ENCODE measurements at regions of chr2 and their contacts with region 1.

Region 1: DNA sequence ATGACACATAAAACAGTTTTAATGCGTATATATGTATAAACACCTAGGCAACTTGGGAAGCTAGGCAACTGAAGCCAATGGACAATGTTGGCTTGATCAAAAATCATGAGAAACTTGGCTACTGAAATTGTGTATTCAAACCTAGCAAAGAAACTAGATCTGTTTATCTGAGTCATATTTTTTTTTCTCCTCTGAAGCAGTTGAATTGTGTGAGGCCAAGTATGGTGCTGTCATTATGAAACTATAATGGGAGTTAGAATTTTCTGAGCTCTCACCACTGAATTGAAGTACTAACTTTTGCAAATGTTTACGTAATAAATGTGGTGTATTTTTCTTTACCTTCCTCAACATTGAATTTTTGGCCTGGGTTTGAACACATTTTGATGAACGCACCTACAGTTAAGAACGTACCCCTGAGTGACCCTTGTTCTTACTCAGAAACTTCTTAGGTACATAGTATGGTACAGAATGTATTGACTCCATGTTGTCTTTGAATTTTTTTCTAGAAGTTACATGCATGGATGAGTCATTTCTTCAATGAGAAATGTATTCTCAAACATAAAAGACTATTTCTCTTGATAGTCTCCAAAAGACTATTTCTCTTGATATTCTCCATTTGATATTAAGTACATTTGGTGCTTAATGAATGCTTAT is 23.8 kb downstream of the CD28 start:
- DNase-seq: no peak
- ATAC-seq: peak; percentile 55
- H3K4me3 Mint-ChIP-seq: no peak overlapping the region
- H3K27ac Mint-ChIP-seq: peak overlapping the region; percentile 72
- H3K4me1 Mint-ChIP-seq: peaks cover 81% of the 10 kb centered on the region
- H3K27me3 Mint-ChIP-seq: no peaks in the 10 kb centered on the region

Region 2: GRCh38 chr2:203706403-203706802 is 23.8 kb before region 1 on chr2 and contains the start of gene CD28:
- CTCF ChIA-PET with region 1: interaction called, 4 read pairs
- POLR2A ChIA-PET with region 1: interaction called, 34 read pairs
- DNase-seq: peak; percentile 95
- ATAC-seq: peak; percentile 81
- H3K4me3 Mint-ChIP-seq: peak within 1 kb of the TSS; percentile 72
- H3K27ac Mint-ChIP-seq: peak within 1 kb of the TSS; percentile 87
- H3K4me1 Mint-ChIP-seq: peaks cover 66% of the 10 kb centered on the region
- H3K27me3 Mint-ChIP-seq: no peaks in the 10 kb centered on the region
- total RNA-seq, gene CD28: 25.6 to 27.2 TPM

Region 3: DNA sequence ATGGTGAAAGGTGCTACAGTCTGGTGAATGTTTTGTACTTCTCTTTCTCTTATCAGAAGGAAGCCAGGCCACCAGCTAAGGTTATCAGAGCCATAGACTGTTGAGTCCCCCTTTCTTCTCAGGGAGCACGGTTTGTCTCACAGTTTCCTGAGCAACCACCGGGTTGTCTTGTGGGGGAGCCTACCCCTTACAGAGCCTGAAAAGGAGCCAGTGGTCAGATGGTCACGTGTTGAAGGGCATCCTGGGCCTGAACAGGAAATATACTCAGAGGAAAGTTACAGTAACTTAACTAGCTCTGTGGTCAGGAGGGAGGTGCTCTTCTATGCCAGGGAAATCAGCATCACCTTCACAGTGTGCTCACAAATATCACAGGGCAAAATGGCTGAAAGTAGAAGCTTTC is 12.1 kb before region 1 on chr2:
- CTCF ChIA-PET with region 1: interaction called, 55 read pairs
- POLR2A ChIA-PET with region 1: interaction called, 64 read pairs
- DNase-seq: peak; percentile 89
- ATAC-seq: peak; percentile 84
- H3K4me3 Mint-ChIP-seq: peak overlapping the region; percentile 62
- H3K27ac Mint-ChIP-seq: peak overlapping the region; percentile 90
- H3K4me1 Mint-ChIP-seq: peaks cover 95% of the 10 kb centered on the region
- H3K27me3 Mint-ChIP-seq: no peaks in the 10 kb centered on the region

Region 4: DNA sequence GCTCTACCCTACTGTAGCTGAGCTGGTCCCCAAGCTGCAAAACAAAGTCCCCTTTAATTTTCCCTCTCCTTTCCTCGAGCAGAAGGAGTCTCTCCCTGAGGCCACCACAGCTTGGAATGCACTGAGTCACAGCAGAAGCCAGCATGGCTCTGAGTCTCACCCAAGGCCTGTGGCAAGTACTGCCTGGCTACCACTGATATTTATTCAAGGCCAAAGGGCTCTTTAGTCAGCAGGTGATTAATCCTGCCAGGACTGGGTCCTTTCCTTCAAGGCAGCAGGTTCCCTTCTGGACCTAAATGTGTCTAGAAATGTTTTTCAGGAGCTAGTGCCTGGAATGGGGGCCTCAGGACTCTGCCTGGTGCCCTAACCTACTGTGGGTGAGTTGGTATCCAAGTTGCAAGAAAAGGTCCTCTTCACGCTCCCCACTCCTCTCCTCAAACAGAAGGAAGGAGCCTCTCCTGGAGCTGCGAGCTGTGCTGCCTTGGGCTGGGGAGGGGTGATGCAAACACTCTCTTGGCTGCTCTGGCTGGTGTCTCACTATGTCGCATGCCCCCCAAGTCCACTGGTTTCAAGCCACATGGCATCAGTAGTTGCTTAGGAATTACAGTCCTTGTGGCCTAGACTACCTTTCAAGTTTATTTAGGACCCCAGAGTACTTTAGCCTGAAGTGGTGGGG is 29.6 kb after region 1 on chr2:
- CTCF ChIA-PET with region 1: no interaction called
- POLR2A ChIA-PET with region 1: no interaction called
- DNase-seq: no peak
- ATAC-seq: no peak
- H3K4me3 Mint-ChIP-seq: no peak overlapping the region
- H3K27ac Mint-ChIP-seq: no peak overlapping the region
- H3K4me1 Mint-ChIP-seq: peaks cover 16% of the 10 kb centered on the region
- H3K27me3 Mint-ChIP-seq: no peaks in the 10 kb centered on the region